Activated naive CD8-positive, alpha-beta T cell treated with anti-CD3 and anti-CD28 coated beads, Interleukin-2, amount 10 ng/mL, durations not matched to agents 7 days and 5 days (primary cell): ENCODE measurements at regions of chr17 and their contacts with region 1.

Region 1: GRCh38 chr17:50904521-50905459 is 38.6 kb upstream of the TOB1 start:
- DNase-seq: no peak
- ATAC-seq: peak; percentile 9
- H3K4me3 Mint-ChIP-seq: no peak overlapping the region
- H3K27ac Mint-ChIP-seq: peak overlapping the region; percentile 21
- H3K4me1 Mint-ChIP-seq: peaks cover 36% of the 10 kb centered on the region
- H3K27me3 Mint-ChIP-seq: no peaks in the 10 kb centered on the region

Region 2: GRCh38 chr17:50881182-50881581 is 23.6 kb before region 1 on chr17:
- POLR2A ChIA-PET with region 1: no interaction called
- DNase-seq: no peak
- ATAC-seq: no peak
- H3K4me3 Mint-ChIP-seq: no peak overlapping the region
- H3K27ac Mint-ChIP-seq: no peak overlapping the region
- H3K4me1 Mint-ChIP-seq: peaks cover 8% of the 10 kb centered on the region
- H3K27me3 Mint-ChIP-seq: peaks cover 21% of the 10 kb centered on the region

Region 3: GRCh38 chr17:50919321-50920085 is 14.7 kb after region 1 on chr17:
- POLR2A ChIA-PET with region 1: interaction called, 11 read pairs
- DNase-seq: peak; percentile 77
- ATAC-seq: peak; percentile 87
- H3K4me3 Mint-ChIP-seq: peak overlapping the region; percentile 79
- H3K27ac Mint-ChIP-seq: peak overlapping the region; percentile 84
- H3K4me1 Mint-ChIP-seq: peaks cover 25% of the 10 kb centered on the region
- H3K27me3 Mint-ChIP-seq: peaks cover 4% of the 10 kb centered on the region

Region 4: GRCh38 chr17:50938821-50939541 is 34.2 kb after region 1 on chr17:
- POLR2A ChIA-PET with region 1: no interaction called
- DNase-seq: no peak
- ATAC-seq: no peak
- H3K4me3 Mint-ChIP-seq: no peak overlapping the region
- H3K27ac Mint-ChIP-seq: no peak overlapping the region
- H3K4me1 Mint-ChIP-seq: peaks cover 17% of the 10 kb centered on the region
- H3K27me3 Mint-ChIP-seq: peaks cover 6% of the 10 kb centered on the region

Region 5: GRCh38 chr17:50967795-50968194 is 63.0 kb after region 1 on chr17:
- POLR2A ChIA-PET with region 1: no interaction called
- DNase-seq: no peak
- ATAC-seq: no peak
- H3K4me3 Mint-ChIP-seq: no peak overlapping the region
- H3K27ac Mint-ChIP-seq: no peak overlapping the region
- H3K4me1 Mint-ChIP-seq: peaks cover 9% of the 10 kb centered on the region
- H3K27me3 Mint-ChIP-seq: no peaks in the 10 kb centered on the region

Region 6: GRCh38 chr17:51097708-51098446 is 193.1 kb after region 1 on chr17:
- POLR2A ChIA-PET with region 1: no interaction called
- DNase-seq: no peak
- ATAC-seq: no peak
- H3K4me3 Mint-ChIP-seq: no peak overlapping the region
- H3K27ac Mint-ChIP-seq: no peak overlapping the region
- H3K4me1 Mint-ChIP-seq: peaks cover 24% of the 10 kb centered on the region
- H3K27me3 Mint-ChIP-seq: peaks cover 2% of the 10 kb centered on the region